Activated CD4-positive, alpha-beta T cell treated with anti-CD3 and anti-CD28 coated beads, Interleukin-2, amount 10 ng/mL, durations not matched to agents 24 days and 14 days (primary cell): ENCODE measurements at regions of chr2 and their contacts with region 1.

Region 1: DNA sequence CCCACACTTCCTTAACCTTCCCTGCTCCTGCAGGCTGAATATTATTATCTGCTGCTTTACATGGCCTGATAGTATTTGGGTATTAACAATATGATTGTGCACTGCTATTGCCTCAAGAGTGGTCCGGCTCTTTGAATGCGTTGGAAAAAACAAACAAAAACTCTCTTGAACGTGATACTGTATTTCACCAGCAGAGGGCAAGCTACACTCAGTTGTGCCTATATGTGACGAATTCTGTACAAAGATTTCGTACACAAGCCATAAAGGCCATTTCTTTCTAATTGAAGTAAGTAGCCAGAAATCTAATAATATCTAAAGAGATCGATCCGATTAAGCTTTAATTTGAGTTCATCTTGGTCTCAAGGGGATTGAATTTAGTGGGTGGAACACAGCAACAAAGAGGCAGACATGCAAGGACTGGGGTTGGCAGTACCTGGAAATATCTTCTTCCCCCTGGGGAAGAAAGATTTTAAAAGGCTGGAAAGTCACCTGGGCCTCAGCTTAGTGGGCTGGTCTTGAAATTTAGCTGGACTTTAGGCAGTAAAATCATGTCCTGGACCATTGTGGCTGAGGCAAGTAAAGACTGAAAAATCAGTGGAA is 49.3 kb upstream of the RAB6D start:
- DNase-seq: peak; percentile 82
- H3K4me3 Mint-ChIP-seq: no peak overlapping the region
- H3K27ac Mint-ChIP-seq: no peak overlapping the region
- H3K4me1 Mint-ChIP-seq: peaks cover 9% of the 10 kb centered on the region
- H3K27me3 Mint-ChIP-seq: peaks cover 44% of the 10 kb centered on the region

Region 2: DNA sequence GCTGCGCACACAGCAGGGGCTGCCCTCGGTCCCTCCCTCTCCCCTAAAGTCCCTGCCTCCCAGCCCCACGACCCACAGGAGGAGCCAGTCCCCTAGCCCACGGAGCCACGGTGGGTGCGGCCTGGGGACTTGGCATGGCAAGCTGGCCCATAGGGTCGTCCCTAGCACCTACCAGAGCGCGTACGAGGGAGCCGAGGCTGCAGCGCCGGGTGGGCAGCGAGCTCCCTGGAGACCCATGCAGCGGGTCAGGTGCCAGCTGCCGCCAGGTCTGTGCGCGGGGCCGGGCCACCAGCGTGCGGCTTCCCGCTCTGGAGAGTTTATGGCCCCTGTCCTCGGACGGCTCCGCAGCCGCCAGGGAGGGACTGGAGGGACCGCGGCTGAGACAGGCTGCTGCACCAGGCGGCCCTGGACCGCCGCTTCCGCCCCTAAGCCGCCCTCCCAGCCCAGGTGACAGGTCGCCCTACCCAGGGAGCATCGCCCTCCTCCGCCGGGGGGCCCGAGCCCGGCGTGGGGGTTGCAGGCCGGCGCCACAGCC is 388.0 kb after region 1 on chr2:
- intact Hi-C with region 1: loop called (anchors 10 kb)
- DNase-seq: no peak
- H3K4me3 Mint-ChIP-seq: no peak overlapping the region
- H3K27ac Mint-ChIP-seq: no peak overlapping the region
- H3K4me1 Mint-ChIP-seq: peaks cover 3% of the 10 kb centered on the region
- H3K27me3 Mint-ChIP-seq: peaks cover 15% of the 10 kb centered on the region